ENCODE measurements at regions of chr17 and their contacts with region 1.

Region 1: GRCh38 chr17:42467859-42468258 is 9.2 kb downstream of the ATP6V0A1 start:
- DNase-seq: no peak
- ATAC-seq: no peak
- H3K4me3 ChIP-seq: no peak overlapping the region
- H3K27ac ChIP-seq: no peak overlapping the region
- H3K4me1 ChIP-seq: peaks cover 33% of the 10 kb centered on the region
- CTCF ChIP-seq: no peak
- EP300 ChIP-seq: no peak
- POLR2A ChIP-seq: no peak
- RAD21 ChIP-seq: no peak

Region 2: DNA sequence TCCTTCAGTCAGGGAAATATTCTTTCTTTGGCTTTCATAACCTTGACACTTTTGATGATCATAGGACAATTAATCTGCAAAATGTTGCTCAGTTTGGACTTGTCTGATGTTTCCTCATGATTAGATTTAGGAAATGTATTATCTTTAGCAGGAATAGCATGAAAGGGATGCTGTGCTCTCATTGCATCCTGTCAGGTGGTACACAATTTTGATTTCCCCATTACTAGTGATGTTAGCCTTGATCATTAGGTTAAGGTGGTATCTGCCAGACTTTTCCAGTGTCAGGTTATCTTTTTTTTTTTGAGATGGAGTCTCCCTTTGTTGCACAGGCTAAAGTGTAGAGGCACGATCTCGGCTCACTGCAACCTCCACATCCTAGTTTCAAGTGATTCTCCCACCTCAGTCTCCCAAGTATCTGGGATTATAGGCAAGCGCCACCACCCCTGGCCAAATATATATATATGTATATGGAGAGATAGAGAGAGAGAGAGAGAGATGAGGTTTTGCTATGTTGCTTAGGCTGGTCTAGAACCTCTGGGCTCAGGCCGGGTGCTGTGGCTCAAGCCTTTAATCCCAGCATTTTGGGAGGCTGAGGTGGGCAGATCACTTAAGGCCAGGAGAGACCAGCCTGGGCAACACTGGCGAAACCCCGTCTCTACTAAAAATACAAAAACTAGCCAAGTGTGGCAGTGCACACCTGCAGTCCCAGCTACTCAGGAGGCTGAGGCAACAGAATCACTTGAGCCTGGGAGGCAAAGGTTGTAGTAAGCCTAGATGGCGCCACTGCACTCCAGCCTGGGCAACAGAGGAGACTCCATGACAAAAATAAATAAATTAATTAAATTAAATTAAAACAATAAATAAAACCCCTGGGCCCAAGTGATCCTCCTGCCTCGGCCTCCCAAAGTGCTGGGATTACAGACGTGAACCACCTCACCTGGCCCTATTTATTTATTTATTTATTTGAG is 29.0 kb before region 1 on chr17:
- CTCF ChIA-PET with region 1: interaction called, 10 read pairs
- POLR2A ChIA-PET with region 1: no interaction called
- DNase-seq: no peak
- ATAC-seq: peak in 1 of 2 experiments; percentile 77; a peak in 3 of 6 replicates
- H3K4me3 ChIP-seq: no peak overlapping the region
- H3K27ac ChIP-seq: no peak overlapping the region
- H3K4me1 ChIP-seq: peaks cover 15% of the 10 kb centered on the region
- CTCF ChIP-seq: peak; percentile 45
- EP300 ChIP-seq: no peak
- POLR2A ChIP-seq: no peak
- RAD21 ChIP-seq: peak; percentile 37 to 55; a peak in 4 of 5 replicates

Region 3: DNA sequence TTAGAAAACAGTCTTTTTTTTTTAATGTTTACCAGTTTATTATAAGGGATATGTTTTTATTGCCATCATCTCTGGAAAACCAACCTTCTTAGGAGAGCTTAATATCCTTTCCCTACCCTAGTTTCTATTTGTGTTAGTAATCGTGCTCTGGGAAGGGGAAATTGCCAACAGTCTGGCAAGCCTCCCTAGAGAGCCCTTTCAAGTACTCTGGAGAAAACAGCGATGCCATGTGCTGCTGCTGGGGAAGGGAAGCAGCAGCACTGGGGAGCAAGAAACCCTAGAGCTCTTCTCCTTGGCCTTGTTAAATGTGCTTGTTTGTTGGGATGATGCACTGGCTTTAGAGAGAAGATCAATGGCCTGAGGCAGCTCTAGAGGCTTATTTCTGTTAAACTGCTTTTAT is 131.0 kb after region 1 on chr17:
- CTCF ChIA-PET with region 1: no interaction called
- POLR2A ChIA-PET with region 1: no interaction called
- DNase-seq: no peak
- ATAC-seq: no peak
- H3K4me3 ChIP-seq: no peak overlapping the region
- H3K27ac ChIP-seq: no peak overlapping the region
- H3K4me1 ChIP-seq: no peaks in the 10 kb centered on the region
- CTCF ChIP-seq: no peak
- EP300 ChIP-seq: no peak
- POLR2A ChIP-seq: no peak
- RAD21 ChIP-seq: no peak

Region 4: GRCh38 chr17:42629411-42630009 is 161.7 kb after region 1 on chr17:
- CTCF ChIA-PET with region 1: no interaction called
- POLR2A ChIA-PET with region 1: no interaction called
- DNase-seq: no peak
- ATAC-seq: no peak
- H3K4me3 ChIP-seq: no peak overlapping the region
- H3K27ac ChIP-seq: no peak overlapping the region
- H3K4me1 ChIP-seq: peaks cover 1% of the 10 kb centered on the region
- CTCF ChIP-seq: no peak
- EP300 ChIP-seq: no peak
- POLR2A ChIP-seq: no peak
- RAD21 ChIP-seq: no peak

Measured in A549 (cell line).